Tibial artery (tissue), 4 donors: ENCODE measurements at regions of chr19 and their contacts with region 1.

Region 1: GRCh38 chr19:12789904-12790619 is 1.2 kb upstream of the JUNB start:
- DNase-seq: peak; percentile 97 to 99
- H3K4me3 ChIP-seq: peak overlapping the region; percentile 86 to 96
- H3K27ac ChIP-seq: peak overlapping the region; percentile 98 to 99
- H3K4me1 ChIP-seq: peaks cover 0 to 62% (median 54%) of the 10 kb centered on the region in 4 donors
- H3K27me3 ChIP-seq: no peaks in the 10 kb centered on the region
- CTCF ChIP-seq: no peak

Region 2: GRCh38 chr19:12777217-12778016 is 12.6 kb before region 1 on chr19:
- intact Hi-C with region 1: loop called (anchors 2 kb)
- DNase-seq: peak; percentile 82 to 88
- H3K4me3 ChIP-seq: peak overlapping the region; percentile 61 to 63
- H3K27ac ChIP-seq: peak overlapping the region; percentile 90 to 91
- H3K4me1 ChIP-seq: peaks cover 0 to 53% (median 39%) of the 10 kb centered on the region in 4 donors
- H3K27me3 ChIP-seq: no peaks in the 10 kb centered on the region
- CTCF ChIP-seq: peak; percentile 94 to 97

Region 3: DNA sequence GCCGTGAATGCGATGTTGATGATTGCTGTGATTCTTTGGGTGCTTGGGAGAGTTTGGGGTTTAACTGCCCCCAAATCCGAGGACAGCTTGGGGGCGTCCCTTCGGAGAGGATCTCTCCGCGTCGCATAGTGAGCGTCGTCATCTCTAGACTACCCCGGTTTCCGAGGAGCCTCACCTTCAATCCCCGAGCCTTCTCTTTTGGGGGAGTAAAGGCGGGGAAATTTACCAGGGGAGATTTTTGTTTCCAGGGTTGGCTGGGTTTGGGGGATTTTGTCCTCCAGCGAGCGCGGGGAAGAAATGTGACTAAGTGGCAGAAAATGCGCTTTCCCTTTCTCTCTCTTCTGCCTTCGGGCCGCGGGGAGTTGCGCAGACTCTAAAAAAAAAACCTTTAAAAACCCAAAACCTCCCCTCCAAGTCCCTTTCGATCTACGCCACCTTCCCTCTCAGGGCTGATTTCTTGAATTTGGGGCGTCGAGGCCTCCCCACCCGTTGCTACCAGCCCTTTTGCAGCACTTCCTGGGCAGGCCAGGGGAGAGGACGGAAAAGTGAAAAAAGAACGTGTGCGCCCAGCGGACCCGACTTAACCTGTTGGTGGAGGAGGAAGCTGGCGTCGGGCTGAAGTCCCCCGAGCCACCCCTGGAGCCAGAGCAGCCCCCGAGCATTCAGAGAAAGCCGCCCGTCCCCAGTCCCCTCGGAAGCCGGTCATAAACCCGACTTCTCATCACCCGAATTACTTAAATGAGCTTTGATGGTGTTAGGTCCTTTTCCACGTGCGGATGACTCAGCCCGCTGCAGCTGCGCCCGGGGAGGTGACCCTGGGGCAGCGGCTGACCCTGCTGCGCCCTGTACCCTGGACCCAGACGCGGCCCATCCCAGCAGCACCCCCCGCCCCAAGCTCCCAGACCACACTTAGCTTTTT is 222.9 kb after region 1 on chr19:
- intact Hi-C with region 1: no loop called
- DNase-seq: peak; percentile 87 to 90
- H3K4me3 ChIP-seq: peak overlapping the region; percentile 44 to 54
- H3K27ac ChIP-seq: peak overlapping the region; percentile 88 to 99
- H3K4me1 ChIP-seq: peaks cover 0 to 100% (median 89%) of the 10 kb centered on the region in 4 donors
- H3K27me3 ChIP-seq: no peaks in the 10 kb centered on the region
- CTCF ChIP-seq: no peak

Region 4: DNA sequence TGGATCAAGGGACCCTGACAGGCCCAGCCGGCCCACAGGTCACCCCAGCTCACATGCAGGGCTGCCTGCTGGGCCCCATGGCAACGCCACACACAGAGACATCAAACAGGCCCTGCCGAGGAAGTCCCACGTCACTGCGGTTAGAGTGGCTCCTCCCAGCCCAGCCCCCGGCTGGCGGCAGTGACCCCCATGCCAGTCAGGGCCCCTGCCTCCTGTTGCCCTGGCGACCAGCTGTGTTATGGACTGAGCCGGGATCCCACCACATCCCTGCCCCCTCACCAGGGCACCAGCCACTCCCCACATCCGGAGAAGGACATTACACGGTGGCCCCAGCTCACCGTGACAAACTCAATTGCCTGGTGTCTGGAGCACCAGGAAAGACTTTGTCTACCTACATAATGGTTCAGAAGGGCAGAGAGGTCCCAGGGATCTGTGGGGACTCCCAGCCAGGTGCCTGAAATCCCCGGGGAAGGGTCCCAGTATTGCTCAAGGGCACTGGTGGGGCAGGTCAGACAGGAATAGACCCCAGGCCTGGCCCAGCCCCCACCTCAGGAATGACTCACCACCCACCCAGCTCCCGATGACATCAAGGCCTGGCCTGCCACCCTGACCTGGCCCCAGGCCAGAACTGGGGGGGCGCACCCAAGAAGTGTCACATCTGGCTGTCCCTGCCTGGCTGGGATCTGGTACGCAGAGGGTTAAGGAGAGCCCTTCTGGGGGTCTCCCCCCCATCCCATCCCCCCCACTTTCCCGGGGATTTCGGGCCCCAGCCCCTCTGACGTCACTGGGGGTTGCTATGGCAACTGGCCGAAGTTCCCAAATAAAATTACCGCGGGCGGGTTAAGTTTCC is 1056.7 kb after region 1 on chr19:
- intact Hi-C with region 1: loop called (anchors 10 kb)
- DNase-seq: peak; percentile 91 to 96
- H3K4me3 ChIP-seq: peak overlapping the region; percentile 55 to 63
- H3K27ac ChIP-seq: peak overlapping the region; percentile 99
- H3K4me1 ChIP-seq: peaks cover 9 to 75% (median 63%) of the 10 kb centered on the region in 4 donors
- H3K27me3 ChIP-seq: no peaks in the 10 kb centered on the region
- CTCF ChIP-seq: no peak